K562 (cell line): ENCODE measurements at regions of chr17 and their contacts with region 1.

Region 1: GRCh38 chr17:82767041-82767754 is 15.3 kb downstream of the TBCD start:
- DNase-seq: peak; percentile 42 to 59 (median 51)
- ATAC-seq: peak; percentile 79
- H3K4me3 ChIP-seq: no peak overlapping the region
- H3K27ac ChIP-seq: no peak overlapping the region
- H3K4me1 ChIP-seq: 0 out of 5 replicates have a peak, but pooled peaks cover 0 to 3% of the 10 kb centered on the region in 2 experiments
- H3K27me3 ChIP-seq: no peaks in the 10 kb centered on the region
- CTCF ChIP-seq: peak; percentile 64 to 78 (median 74)
- EP300 ChIP-seq: no peak
- POLR2A ChIP-seq: no peak
- RAD21 ChIP-seq: peak; percentile 30 to 66; a peak in 3 of 4 replicates

Region 2: DNA sequence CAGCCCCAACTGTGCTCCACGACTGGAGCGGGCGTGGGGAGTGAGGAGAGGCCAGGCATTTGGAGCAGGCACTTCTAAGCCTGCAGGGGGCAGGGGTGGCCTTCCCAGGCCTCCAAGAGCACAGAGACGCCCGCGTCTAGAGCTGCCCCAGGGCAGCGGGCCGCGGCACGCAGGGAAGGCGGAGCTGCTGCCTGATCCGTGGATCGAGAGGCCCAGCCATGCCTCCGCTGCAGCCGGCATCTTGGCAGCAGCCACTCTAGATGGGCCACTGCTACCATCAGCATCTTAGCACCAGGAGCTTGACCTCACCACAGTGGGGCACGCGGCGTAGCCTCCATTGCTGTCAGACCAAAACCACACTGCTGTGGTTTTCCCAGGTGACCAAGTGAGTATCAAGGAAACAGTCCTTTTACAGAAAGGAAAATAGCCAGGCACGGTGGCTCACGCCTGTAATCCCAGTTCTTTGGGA is 98.5 kb before region 1 on chr17:
- CTCF ChIA-PET with region 1: interaction called, 6 read pairs
- POLR2A ChIA-PET with region 1: no interaction called
- in situ Hi-C with region 1: no loop called
- intact Hi-C with region 1: loop called (anchors 1 kb)
- DNase-seq: peak; percentile 59 to 70 (median 65)
- ATAC-seq: peak; percentile 98
- H3K4me3 ChIP-seq: no peak overlapping the region
- H3K27ac ChIP-seq: no peak overlapping the region
- H3K4me1 ChIP-seq: peaks cover 3 to 34% of the 10 kb centered on the region in 2 experiments; a peak in 2 of 5 replicates
- H3K27me3 ChIP-seq: peaks cover 6 to 24% of the 10 kb centered on the region in 2 experiments; a peak in 3 of 5 replicates
- CTCF ChIP-seq: peak; percentile 70 to 82 (median 75)
- EP300 ChIP-seq: no peak
- POLR2A ChIP-seq: no peak
- RAD21 ChIP-seq: peak; percentile 57 to 78

Region 3: GRCh38 chr17:83010206-83011200 is 243.3 kb after region 1 on chr17:
- CTCF ChIA-PET with region 1: no interaction called
- POLR2A ChIA-PET with region 1: no interaction called
- in situ Hi-C with region 1: no loop called
- intact Hi-C with region 1: no loop called
- DNase-seq: no peak
- ATAC-seq: no peak
- H3K4me3 ChIP-seq: no peak overlapping the region
- H3K27ac ChIP-seq: no peak overlapping the region
- H3K4me1 ChIP-seq: peaks cover 0 to 13% of the 10 kb centered on the region in 2 experiments; a peak in 1 of 5 replicates
- H3K27me3 ChIP-seq: no peaks in the 10 kb centered on the region
- CTCF ChIP-seq: no peak
- EP300 ChIP-seq: no peak
- POLR2A ChIP-seq: no peak
- RAD21 ChIP-seq: no peak